Calu3 (cell line): ENCODE measurements at regions of chr2 and their contacts with region 1.

Region 1: GRCh38 chr2:140808816-140809215 is 1322.0 kb downstream of the LRP1B start:
- DNase-seq: no peak
- H3K4me3 Mint-ChIP-seq: no peak overlapping the region
- H3K27ac Mint-ChIP-seq: no peak overlapping the region
- H3K4me1 Mint-ChIP-seq: peaks cover 29% of the 10 kb centered on the region
- H3K27me3 Mint-ChIP-seq: no peaks in the 10 kb centered on the region
- CTCF ChIP-seq: no peak

Region 2: GRCh38 chr2:140550821-140551220 is 258.0 kb before region 1 on chr2:
- CTCF ChIA-PET with region 1: no interaction called
- intact Hi-C with region 1: no loop called
- DNase-seq: no peak
- H3K4me3 Mint-ChIP-seq: no peak overlapping the region
- H3K27ac Mint-ChIP-seq: no peak overlapping the region
- H3K4me1 Mint-ChIP-seq: no peaks in the 10 kb centered on the region
- H3K27me3 Mint-ChIP-seq: no peaks in the 10 kb centered on the region
- CTCF ChIP-seq: no peak

Region 3: GRCh38 chr2:140586379-140586778 is 222.4 kb before region 1 on chr2:
- CTCF ChIA-PET with region 1: no interaction called
- intact Hi-C with region 1: loop called (anchors 5 kb)
- DNase-seq: peak; percentile 45
- H3K4me3 Mint-ChIP-seq: no peak overlapping the region
- H3K27ac Mint-ChIP-seq: no peak overlapping the region
- H3K4me1 Mint-ChIP-seq: peaks cover 18% of the 10 kb centered on the region
- H3K27me3 Mint-ChIP-seq: no peaks in the 10 kb centered on the region
- CTCF ChIP-seq: peak; percentile 46

Region 4: GRCh38 chr2:140658766-140659692 is 149.8 kb before region 1 on chr2:
- CTCF ChIA-PET with region 1: no interaction called
- intact Hi-C with region 1: loop called (anchors 5 kb)
- DNase-seq: no peak
- H3K4me3 Mint-ChIP-seq: peak overlapping the region; percentile 12
- H3K27ac Mint-ChIP-seq: peak overlapping the region; percentile 33
- H3K4me1 Mint-ChIP-seq: peaks cover 21% of the 10 kb centered on the region
- H3K27me3 Mint-ChIP-seq: no peaks in the 10 kb centered on the region
- CTCF ChIP-seq: no peak

Region 5: GRCh38 chr2:140683658-140684057 is 125.2 kb before region 1 on chr2:
- CTCF ChIA-PET with region 1: no interaction called
- intact Hi-C with region 1: no loop called
- DNase-seq: no peak
- H3K4me3 Mint-ChIP-seq: no peak overlapping the region
- H3K27ac Mint-ChIP-seq: no peak overlapping the region
- H3K4me1 Mint-ChIP-seq: peaks cover 28% of the 10 kb centered on the region
- H3K27me3 Mint-ChIP-seq: no peaks in the 10 kb centered on the region
- CTCF ChIP-seq: no peak